Sciatic nerve (tissue), 2 donors: ENCODE measurements at regions of chr11 and their contacts with region 1.

Region 1: GRCh38 chr11:106503901-106504300 is 426.4 kb downstream of the AASDHPPT start:
- DNase-seq: no peak
- ATAC-seq: no peak

Region 2: DNA sequence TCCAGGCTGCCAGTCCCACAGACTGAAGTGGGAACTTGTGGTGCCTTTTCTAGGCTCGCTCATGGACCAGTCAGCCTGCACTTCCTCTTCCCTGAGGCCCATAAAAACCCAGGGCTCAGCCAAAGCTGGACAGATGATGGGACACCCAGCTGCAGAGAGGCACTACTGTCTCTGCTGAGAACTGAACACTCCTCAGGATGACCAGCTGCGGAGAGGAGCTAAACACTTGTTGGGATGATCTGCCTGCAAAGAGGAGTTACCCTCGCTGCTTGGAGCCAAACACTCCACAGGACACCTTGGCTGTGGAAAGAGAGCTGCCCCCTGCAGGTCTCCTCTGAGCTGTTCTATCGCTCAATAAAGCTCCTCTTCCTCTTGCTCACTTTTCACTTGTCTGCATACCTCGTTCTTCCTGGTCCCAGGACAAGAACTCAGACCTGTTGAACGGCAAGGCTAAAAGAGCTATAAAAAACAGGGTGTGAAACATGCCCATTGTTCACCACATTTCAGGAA is 48.8 kb after region 1 on chr11:
- intact Hi-C with region 1: no loop called
- DNase-seq: no peak
- ATAC-seq: peak; percentile 13

Region 3: DNA sequence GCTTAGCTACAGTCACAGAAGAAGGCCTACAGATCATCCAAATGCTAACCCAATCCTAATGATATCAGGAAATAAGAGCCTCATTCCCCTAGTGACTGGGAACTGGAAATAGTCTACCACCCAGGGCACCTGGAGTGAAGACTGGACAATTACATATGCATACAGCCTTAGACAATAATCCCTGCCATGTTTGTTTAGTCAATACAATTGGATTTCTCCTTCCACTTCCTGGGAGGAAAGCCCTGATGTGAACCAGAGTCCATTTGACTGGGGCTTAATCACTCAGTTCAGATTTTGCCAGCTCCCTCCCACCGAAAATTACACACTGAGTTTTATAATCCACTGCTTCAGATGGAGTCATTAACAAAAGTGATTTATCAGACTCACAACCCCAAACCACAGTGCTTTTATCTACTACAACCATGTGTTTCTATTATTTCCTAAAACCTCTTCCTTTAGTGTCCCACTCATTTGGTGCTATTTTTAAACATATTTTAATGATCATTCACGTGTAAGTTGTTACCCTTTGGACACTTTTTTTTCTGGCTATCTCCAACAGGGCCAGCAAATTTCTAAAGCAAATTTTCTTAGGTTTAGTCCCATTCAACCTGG is 923.8 kb after region 1 on chr11:
- intact Hi-C with region 1: loop called (anchors 10 kb)
- DNase-seq: no peak
- ATAC-seq: no peak